Activated naive CD4-positive, alpha-beta T cell treated with anti-CD3 and anti-CD28 coated beads for 36 hours (primary cell): ENCODE measurements at regions of chr1 and their contacts with region 1.

Region 1: DNA sequence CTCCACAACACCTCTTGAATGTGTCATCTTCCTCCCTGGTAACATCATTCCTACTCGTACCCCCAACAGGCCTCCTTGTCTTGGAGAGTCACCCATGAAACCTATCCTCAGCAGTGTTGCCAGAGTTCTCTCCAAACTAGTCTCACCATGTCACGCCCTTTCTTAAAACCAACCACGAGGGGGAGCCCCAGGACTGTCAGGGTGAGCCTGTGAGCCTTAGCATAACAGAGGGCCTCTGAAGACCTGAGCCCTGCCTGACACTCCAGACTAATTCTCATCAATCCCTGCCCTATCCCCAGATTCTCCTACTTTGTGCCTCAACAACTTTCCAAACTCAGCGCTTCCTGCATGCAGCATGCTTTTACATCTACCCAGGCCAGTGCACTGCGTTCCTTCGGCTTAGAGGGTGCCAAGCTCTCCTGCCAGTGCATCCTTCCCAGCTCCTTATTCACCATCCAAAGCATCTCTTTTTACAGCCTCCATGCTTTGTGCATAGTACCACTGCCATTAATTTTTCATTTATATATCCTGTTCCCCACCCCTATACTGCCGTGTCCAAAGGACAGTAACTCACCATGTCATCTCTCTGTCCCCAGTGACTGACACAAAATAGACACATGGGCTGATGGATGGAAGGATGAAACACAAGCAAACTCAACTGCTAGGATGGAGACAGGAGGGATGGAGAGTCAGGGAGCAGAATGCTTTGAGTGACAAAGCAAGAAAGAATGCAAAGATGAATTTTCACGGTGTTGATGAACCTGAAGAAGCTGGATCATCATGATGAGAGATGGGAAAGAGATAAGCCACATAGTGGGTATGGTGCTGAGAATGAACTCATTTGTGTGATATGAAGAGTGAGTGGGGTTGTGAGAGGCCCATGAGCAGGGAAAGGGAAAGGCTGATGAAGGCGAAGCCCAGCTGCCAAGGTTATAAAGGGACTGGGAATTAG is 34.0 kb downstream of the ZNF697 start:
- DNase-seq: peak; percentile 86
- H3K4me3 Mint-ChIP-seq: no peak overlapping the region
- H3K27ac Mint-ChIP-seq: no peak overlapping the region
- H3K4me1 Mint-ChIP-seq: no peaks in the 10 kb centered on the region
- H3K27me3 Mint-ChIP-seq: no peaks in the 10 kb centered on the region

Region 2: GRCh38 chr1:119662034-119662437 is 48.0 kb after region 1 on chr1:
- CTCF ChIA-PET with region 1: interaction called, 7 read pairs
- intact Hi-C with region 1: loop called (anchors 1 kb)
- DNase-seq: no peak
- H3K4me3 Mint-ChIP-seq: no peak overlapping the region
- H3K27ac Mint-ChIP-seq: no peak overlapping the region
- H3K4me1 Mint-ChIP-seq: no peaks in the 10 kb centered on the region
- H3K27me3 Mint-ChIP-seq: peaks cover 5% of the 10 kb centered on the region

Region 3: GRCh38 chr1:119808972-119809550 is 195.0 kb after region 1 on chr1:
- CTCF ChIA-PET with region 1: no interaction called
- intact Hi-C with region 1: loop called (anchors 5 kb)
- DNase-seq: peak; percentile 82
- H3K4me3 Mint-ChIP-seq: no peak overlapping the region
- H3K27ac Mint-ChIP-seq: no peak overlapping the region
- H3K4me1 Mint-ChIP-seq: peaks cover 3% of the 10 kb centered on the region
- H3K27me3 Mint-ChIP-seq: peaks cover 2% of the 10 kb centered on the region

Region 4: GRCh38 chr1:119895986-119896702 is 282.1 kb after region 1 on chr1 and contains the start of gene ADAM30:
- CTCF ChIA-PET with region 1: no interaction called
- intact Hi-C with region 1: no loop called
- DNase-seq: no peak
- H3K4me3 Mint-ChIP-seq: no peak within 1 kb of the TSS
- H3K27ac Mint-ChIP-seq: no peak within 1 kb of the TSS
- H3K4me1 Mint-ChIP-seq: peaks cover 8% of the 10 kb centered on the region
- H3K27me3 Mint-ChIP-seq: peaks cover 12% of the 10 kb centered on the region
- total RNA-seq, gene ADAM30: not detected